Activated CD4-positive, alpha-beta memory T cell treated with anti-CD3 and anti-CD28 coated beads for 36 hours (primary cell): ENCODE measurements at regions of chr9 and their contacts with region 1.

Region 1: GRCh38 chr9:104927912-104928740 is at the start of gene ABCA1:
- DNase-seq: peak; percentile 86
- H3K4me3 Mint-ChIP-seq: peak within 1 kb of the TSS; percentile 82
- H3K27ac Mint-ChIP-seq: peak within 1 kb of the TSS; percentile 49
- H3K4me1 Mint-ChIP-seq: peaks cover 9% of the 10 kb centered on the region
- H3K27me3 Mint-ChIP-seq: peaks cover 12% of the 10 kb centered on the region
- total RNA-seq, gene ABCA1: 6.1 TPM

Region 2: DNA sequence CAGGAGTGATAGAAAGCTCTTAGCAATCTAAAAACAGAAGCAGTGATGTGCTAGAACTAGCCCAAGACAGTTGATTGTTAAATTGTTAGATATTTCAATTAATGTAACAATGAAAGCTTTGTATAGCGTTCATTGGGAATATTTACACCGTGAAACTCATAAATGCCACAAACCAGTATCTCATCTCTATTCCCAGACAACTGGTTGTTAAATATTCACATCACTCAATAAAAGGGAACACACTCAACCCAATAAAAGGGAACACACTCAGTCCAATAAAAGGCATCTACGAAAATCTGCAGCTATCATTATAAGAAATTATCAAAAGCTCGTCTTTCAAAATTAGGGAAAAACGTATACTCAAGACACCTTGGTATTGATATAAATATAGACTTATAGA is 1662.1 kb before region 1 on chr9:
- CTCF ChIA-PET with region 1: no interaction called
- POLR2A ChIA-PET with region 1: no interaction called
- intact Hi-C with region 1: no loop called
- DNase-seq: no peak
- H3K4me3 Mint-ChIP-seq: no peak overlapping the region
- H3K27ac Mint-ChIP-seq: no peak overlapping the region
- H3K4me1 Mint-ChIP-seq: no peaks in the 10 kb centered on the region
- H3K27me3 Mint-ChIP-seq: no peaks in the 10 kb centered on the region

Region 3: GRCh38 chr9:104633976-104634520 is 294.1 kb before region 1 on chr9:
- CTCF ChIA-PET with region 1: no interaction called
- POLR2A ChIA-PET with region 1: no interaction called
- intact Hi-C with region 1: no loop called
- DNase-seq: no peak
- H3K4me3 Mint-ChIP-seq: no peak overlapping the region
- H3K27ac Mint-ChIP-seq: no peak overlapping the region
- H3K4me1 Mint-ChIP-seq: no peaks in the 10 kb centered on the region
- H3K27me3 Mint-ChIP-seq: no peaks in the 10 kb centered on the region

Region 4: DNA sequence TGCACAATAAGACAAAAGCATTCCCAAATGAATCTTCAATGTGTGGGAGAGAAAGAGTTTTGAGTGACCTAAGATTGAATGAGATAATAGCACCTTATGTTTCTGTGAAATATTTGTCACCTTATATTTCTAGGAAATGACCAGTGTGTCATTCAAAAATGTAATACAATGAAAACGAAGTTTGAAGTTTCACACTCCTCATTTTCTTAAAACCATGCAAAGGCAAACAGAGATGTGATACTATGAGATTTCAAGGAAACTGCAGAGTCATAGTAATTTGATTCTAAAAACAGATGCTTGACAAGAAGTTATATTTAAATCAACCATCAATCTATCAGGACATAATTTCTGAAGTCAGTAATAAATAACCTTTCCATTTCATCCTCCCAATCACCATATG is 13.5 kb after region 1 on chr9:
- CTCF ChIA-PET with region 1: no interaction called
- POLR2A ChIA-PET with region 1: no interaction called
- intact Hi-C with region 1: loop called (anchors 1 kb)
- DNase-seq: no peak
- H3K4me3 Mint-ChIP-seq: no peak overlapping the region
- H3K27ac Mint-ChIP-seq: peak overlapping the region; percentile 62
- H3K4me1 Mint-ChIP-seq: peaks cover 14% of the 10 kb centered on the region
- H3K27me3 Mint-ChIP-seq: no peaks in the 10 kb centered on the region

Region 5: DNA sequence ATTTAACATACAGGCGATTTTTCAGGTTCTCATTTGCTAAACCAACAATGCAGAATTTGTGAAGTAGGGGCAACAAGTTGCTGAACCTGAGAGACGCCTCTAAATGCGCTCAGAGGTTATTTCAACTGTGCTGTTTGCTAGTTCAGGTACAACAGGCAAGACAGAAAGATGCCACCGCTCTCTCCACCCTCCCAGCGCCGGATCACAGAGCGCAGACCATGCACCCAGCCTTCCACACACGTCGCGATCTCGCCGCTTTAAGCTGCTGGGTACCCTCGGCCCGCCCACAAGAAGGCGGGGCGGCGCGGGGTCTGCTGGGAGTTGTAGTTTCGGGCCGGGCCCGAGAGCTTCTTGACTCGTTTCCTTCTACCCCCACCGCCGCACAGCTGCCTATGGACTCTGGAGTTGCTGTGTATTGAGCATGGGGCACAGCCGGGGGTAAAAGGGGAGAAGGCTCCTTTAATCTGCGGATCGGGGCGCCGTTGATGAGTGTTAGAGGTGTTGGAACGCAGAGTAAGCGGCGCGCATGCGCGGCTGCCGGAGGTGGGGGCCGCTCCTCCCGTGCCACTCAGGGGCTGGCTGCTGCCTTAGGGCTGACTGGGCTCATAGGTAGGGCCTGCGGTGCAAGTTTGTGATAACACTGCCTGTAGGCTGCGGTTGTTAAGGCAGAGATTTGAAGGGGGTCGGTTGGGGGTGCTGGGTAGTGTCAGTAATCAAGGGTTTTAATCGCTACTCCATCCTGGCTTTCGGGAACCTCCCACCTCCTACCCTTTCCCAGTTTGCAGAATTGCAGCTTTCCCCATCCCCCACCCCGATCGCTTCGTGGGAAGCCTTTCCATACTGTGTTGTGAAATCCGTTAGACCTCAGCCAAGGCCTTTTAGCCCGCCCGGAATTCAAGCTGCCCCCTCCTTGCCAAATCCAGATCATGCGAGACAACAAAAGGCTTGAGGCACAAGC is 40.2 kb after region 1 on chr9:
- CTCF ChIA-PET with region 1: interaction called, 7 read pairs
- POLR2A ChIA-PET with region 1: interaction called, 4 read pairs
- intact Hi-C with region 1: loop called (anchors 1 kb)
- DNase-seq: peak; percentile 92
- H3K4me3 Mint-ChIP-seq: peak overlapping the region; percentile 89
- H3K27ac Mint-ChIP-seq: peak overlapping the region; percentile 84
- H3K4me1 Mint-ChIP-seq: peaks cover 10% of the 10 kb centered on the region
- H3K27me3 Mint-ChIP-seq: peaks cover 15% of the 10 kb centered on the region

Region 6: GRCh38 chr9:105127863-105128220 is 199.7 kb after region 1 on chr9:
- CTCF ChIA-PET with region 1: no interaction called
- POLR2A ChIA-PET with region 1: no interaction called
- intact Hi-C with region 1: loop called (anchors 1 kb)
- DNase-seq: peak; percentile 62
- H3K4me3 Mint-ChIP-seq: no peak overlapping the region
- H3K27ac Mint-ChIP-seq: peak overlapping the region; percentile 60
- H3K4me1 Mint-ChIP-seq: peaks cover 38% of the 10 kb centered on the region
- H3K27me3 Mint-ChIP-seq: no peaks in the 10 kb centered on the region

Region 7: DNA sequence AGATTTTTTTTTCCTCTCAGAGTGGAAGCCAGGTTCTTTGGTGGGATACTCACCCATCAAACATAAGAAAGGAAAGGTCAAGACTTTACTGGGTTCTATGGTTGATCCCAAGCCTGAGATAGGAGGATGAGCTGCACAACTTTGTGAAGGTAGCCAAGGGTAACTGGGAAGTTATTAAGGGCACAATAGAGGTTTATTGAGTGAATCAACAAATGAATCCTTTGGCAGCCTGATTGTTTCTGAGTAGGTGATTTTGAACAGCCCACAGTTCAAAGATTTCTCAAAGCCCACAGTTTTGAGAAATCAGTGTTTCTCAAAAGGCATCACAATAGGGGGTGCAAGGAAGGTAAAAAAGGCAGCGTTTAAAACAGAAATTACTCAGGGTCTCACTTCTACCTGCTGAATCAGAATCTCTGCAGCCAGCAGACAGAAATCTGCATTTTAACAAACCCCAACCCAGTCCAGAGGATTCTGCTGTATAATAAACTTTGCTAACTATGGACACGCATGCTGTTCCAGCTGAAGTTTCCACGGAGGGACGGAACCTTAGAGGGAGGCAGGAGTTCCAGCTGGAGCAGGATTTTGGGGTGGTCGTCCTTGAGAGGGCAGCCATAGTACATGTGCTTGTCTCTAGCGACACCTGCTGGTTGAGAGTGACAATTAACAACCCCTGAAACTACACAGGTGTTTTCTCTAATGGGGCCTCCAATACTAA is 487.0 kb after region 1 on chr9:
- CTCF ChIA-PET with region 1: interaction called, 5 read pairs
- POLR2A ChIA-PET with region 1: no interaction called
- intact Hi-C with region 1: loop called (anchors 1 kb)
- DNase-seq: peak; percentile 53
- H3K4me3 Mint-ChIP-seq: no peak overlapping the region
- H3K27ac Mint-ChIP-seq: no peak overlapping the region
- H3K4me1 Mint-ChIP-seq: peaks cover 4% of the 10 kb centered on the region
- H3K27me3 Mint-ChIP-seq: peaks cover 37% of the 10 kb centered on the region